CD8-positive, alpha-beta T cell (primary cell): ENCODE measurements at regions of chr12 and their contacts with region 1.

Region 1: DNA sequence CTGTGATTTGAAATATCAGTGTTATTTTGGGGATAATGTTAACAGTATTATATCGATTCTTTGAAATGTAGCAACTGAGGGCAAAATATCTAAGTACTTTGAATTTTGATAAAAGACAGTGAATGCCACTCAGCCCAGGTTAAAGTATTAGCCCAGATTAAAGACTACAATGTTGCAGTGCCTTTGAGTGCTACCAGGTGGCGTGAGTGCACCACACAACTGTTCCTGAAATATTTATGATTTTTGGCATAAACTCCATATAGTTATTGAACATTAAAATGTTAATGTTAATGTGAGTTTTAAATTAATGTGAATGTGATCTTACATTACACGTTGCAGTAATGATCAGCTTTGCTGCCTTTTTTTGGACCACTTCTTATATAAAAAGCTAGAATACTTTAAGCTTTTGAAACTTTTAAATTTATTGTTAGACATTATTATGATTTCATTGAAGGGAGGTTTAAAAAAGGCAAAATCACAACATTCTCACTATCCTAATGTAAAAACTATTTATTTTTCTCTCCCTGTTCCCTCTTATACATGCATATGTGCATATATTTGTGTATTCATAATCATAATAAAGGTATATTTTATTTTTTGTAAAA is 22.5 kb downstream of the MRPS35 start:
- DNase-seq: peak in 5 of 9 experiments; percentile 23 to 52 (median 37)
- ATAC-seq: peak; percentile 59
- H3K4me3 ChIP-seq: no peak overlapping the region
- H3K4me3 Mint-ChIP-seq: no peak overlapping the region
- H3K27ac ChIP-seq: no peak overlapping the region
- H3K27ac Mint-ChIP-seq: no peak overlapping the region
- H3K4me1 ChIP-seq: no peaks in the 10 kb centered on the region
- H3K4me1 Mint-ChIP-seq: no peaks in the 10 kb centered on the region
- H3K27me3 ChIP-seq: no peaks in the 10 kb centered on the region
- H3K27me3 Mint-ChIP-seq: no peaks in the 10 kb centered on the region
- CTCF ChIP-seq: peak; percentile 83

Region 2: GRCh38 chr12:27821259-27821973 is 88.3 kb after region 1 on chr12:
- CTCF ChIA-PET with region 1: interaction called, 76 read pairs
- POLR2A ChIA-PET with region 1: no interaction called
- intact Hi-C with region 1: loop called (anchors 1 kb)
- DNase-seq: peak in 7 of 9 experiments; percentile 3 to 70 (median 25)
- ATAC-seq: no peak
- H3K4me3 ChIP-seq: peak overlapping the region in 1 of 2 experiments; percentile 26
- H3K4me3 Mint-ChIP-seq: peak overlapping the region; percentile 44
- H3K27ac ChIP-seq: peak overlapping the region in 1 of 2 experiments; percentile 36
- H3K27ac Mint-ChIP-seq: peak overlapping the region; percentile 82
- H3K4me1 ChIP-seq: no peaks in the 10 kb centered on the region
- H3K4me1 Mint-ChIP-seq: peaks cover 13% of the 10 kb centered on the region
- H3K27me3 ChIP-seq: no peaks in the 10 kb centered on the region
- H3K27me3 Mint-ChIP-seq: no peaks in the 10 kb centered on the region
- CTCF ChIP-seq: peak; percentile 72

Region 3: DNA sequence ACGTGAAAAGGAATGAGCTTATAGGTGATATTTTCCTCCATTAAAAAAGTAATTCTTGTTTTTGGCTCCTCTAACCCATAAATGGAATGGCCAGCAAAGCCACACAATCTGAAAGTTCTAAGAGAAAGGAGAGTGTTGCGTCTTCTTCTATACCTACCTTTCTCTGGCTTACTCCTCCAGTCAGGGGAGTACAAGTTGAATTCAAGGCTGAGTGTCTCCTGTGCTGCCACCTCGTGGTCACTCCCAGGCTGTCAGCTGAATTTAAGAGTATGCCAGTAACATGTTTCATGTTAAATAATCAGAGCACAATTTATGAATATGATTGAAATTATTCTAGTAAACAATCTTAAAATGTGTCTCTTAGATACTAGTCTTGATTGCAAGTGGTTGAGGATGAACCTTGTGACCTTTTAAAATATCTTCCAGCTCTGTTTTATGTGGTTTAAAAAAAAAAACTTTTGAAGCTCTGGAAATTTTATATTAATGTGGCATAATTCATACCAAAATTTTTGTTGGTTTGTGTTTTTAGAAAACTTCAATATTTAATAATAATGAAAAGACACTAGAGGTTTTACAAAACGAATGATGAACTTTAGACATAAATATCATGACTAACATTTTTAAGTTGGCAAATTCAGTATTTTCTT is 207.7 kb after region 1 on chr12:
- CTCF ChIA-PET with region 1: interaction called, 16 read pairs
- POLR2A ChIA-PET with region 1: no interaction called
- intact Hi-C with region 1: loop called in 1 of 2 experiments (anchors 1 kb)
- DNase-seq: peak; percentile 35 to 74 (median 62)
- ATAC-seq: peak; percentile 68
- H3K4me3 ChIP-seq: no peak overlapping the region
- H3K4me3 Mint-ChIP-seq: no peak overlapping the region
- H3K27ac ChIP-seq: no peak overlapping the region
- H3K27ac Mint-ChIP-seq: no peak overlapping the region
- H3K4me1 ChIP-seq: no peaks in the 10 kb centered on the region
- H3K4me1 Mint-ChIP-seq: no peaks in the 10 kb centered on the region
- H3K27me3 ChIP-seq: no peaks in the 10 kb centered on the region
- H3K27me3 Mint-ChIP-seq: peaks cover 14% of the 10 kb centered on the region
- CTCF ChIP-seq: peak; percentile 78

Region 4: GRCh38 chr12:28872654-28873268 is 1139.6 kb after region 1 on chr12:
- CTCF ChIA-PET with region 1: no interaction called
- POLR2A ChIA-PET with region 1: no interaction called
- intact Hi-C with region 1: loop called in 1 of 2 experiments (anchors 5 kb)
- DNase-seq: peak in 2 of 9 experiments; percentile 17 to 30
- ATAC-seq: no peak
- H3K4me3 ChIP-seq: no peak overlapping the region
- H3K4me3 Mint-ChIP-seq: no peak overlapping the region
- H3K27ac ChIP-seq: no peak overlapping the region
- H3K27ac Mint-ChIP-seq: no peak overlapping the region
- H3K4me1 ChIP-seq: no peaks in the 10 kb centered on the region
- H3K4me1 Mint-ChIP-seq: no peaks in the 10 kb centered on the region
- H3K27me3 ChIP-seq: no peaks in the 10 kb centered on the region
- H3K27me3 Mint-ChIP-seq: peaks cover 4% of the 10 kb centered on the region
- CTCF ChIP-seq: no peak

Region 5: DNA sequence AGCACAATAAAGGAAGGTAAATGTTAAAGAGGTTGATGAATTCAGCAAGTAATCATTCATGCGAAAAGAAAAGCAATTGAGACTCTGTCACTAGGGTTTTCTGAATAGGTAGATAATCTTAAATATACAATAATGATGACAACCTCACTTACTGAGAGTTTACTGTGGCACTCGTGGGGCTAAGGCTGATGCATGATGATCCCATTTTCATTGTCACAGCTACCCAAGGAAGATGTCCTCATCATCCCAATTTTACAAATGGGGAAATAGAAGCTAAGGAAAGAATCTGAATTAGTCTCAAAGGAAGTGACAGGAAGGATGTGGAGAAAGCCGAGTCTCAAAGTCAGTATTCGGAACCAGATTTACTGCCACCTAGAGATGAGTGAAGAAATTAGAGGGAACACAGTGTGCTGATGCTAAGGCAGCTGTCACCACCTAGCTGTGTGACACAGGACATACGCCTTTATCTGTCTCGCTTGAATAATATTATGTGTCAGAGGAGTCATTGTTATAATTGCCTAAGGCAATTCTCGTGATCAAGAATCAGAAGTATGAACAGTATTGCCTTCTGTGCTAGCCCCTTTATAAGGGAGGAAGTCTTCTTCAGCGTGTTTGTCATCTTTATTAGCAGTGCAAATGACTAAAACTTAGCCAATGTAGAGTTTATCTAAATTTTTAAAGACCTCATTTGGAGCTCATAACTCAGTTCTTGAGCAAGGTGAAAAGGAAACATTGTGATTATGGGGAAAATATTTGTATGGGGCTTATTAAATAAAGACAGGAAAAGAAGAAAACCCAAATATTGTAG is 1584.6 kb after region 1 on chr12:
- CTCF ChIA-PET with region 1: no interaction called
- POLR2A ChIA-PET with region 1: no interaction called
- intact Hi-C with region 1: loop called in 1 of 2 experiments (anchors 5 kb)
- DNase-seq: peak in 8 of 9 experiments; percentile 3 to 79 (median 39)
- ATAC-seq: peak; percentile 98
- H3K4me3 ChIP-seq: no peak overlapping the region
- H3K4me3 Mint-ChIP-seq: no peak overlapping the region
- H3K27ac ChIP-seq: no peak overlapping the region
- H3K27ac Mint-ChIP-seq: no peak overlapping the region
- H3K4me1 ChIP-seq: no peaks in the 10 kb centered on the region
- H3K4me1 Mint-ChIP-seq: peaks cover 8% of the 10 kb centered on the region
- H3K27me3 ChIP-seq: no peaks in the 10 kb centered on the region
- H3K27me3 Mint-ChIP-seq: no peaks in the 10 kb centered on the region
- CTCF ChIP-seq: peak; percentile 75